Pancreas (tissue), 10 donors: ENCODE measurements at regions of chr6 and their contacts with region 1.

Region 1: GRCh38 chr6:17156112-17156921 is 54.5 kb downstream of the STMND1 start:
- DNase-seq: peak in 5 of 6 donors; percentile 46 to 70 (median 50)
- ATAC-seq: peak; percentile 57 to 79 (median 74)
- H3K4me3 ChIP-seq: no peak overlapping the region
- H3K27ac ChIP-seq: no peak overlapping the region
- H3K4me1 ChIP-seq: no peaks in the 10 kb centered on the region
- H3K27me3 ChIP-seq: no peaks in the 10 kb centered on the region
- CTCF ChIP-seq: peak; percentile 44 to 67 (median 64)

Region 2: DNA sequence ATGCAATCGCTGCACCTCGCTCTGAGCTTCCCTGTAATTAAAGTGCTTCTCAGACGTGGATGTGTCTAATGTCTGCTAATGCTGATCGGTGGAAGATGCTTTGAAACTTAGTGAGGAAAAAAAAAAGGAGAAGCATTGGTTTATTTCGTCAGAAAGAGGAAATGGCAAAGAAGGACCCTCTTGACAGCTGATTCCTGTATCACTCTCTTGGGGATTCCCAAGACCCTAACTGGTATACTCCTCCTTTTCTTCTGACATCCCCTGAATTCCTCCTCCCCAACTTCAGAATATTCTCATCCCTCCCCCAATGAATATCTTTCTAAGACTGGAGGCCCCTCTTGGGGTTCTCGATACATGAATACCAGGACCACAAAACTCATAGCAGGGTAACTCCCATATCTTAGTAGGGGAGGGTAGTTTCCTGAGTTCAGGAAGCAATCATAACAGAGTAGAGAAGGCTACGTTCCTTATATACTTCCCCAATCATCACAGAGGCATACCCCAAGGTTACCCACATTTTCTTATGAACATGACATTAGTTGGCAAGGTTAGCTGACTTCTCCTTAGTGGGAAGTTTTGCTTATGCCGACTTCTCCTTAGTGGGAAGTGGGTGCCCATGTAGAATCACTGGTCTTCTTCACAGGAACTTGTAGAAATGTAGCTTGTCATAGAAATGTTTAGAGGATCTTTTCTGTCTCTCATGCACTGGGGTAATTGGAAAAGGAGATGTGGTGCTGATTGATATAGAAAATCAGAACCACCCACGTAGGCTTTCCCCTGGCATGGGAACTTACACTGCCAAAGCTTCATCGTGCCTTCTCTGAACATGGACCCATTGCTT is 331.3 kb before region 1 on chr6:
- intact Hi-C with region 1: no loop called
- DNase-seq: no peak
- ATAC-seq: peak in 1 of 4 donors; percentile 17
- H3K4me3 ChIP-seq: no peak overlapping the region
- H3K27ac ChIP-seq: no peak overlapping the region
- H3K4me1 ChIP-seq: peaks cover 7 to 13% (median 11%) of the 10 kb centered on the region in 3 donors
- H3K27me3 ChIP-seq: no peaks in the 10 kb centered on the region
- CTCF ChIP-seq: no peak

Region 3: DNA sequence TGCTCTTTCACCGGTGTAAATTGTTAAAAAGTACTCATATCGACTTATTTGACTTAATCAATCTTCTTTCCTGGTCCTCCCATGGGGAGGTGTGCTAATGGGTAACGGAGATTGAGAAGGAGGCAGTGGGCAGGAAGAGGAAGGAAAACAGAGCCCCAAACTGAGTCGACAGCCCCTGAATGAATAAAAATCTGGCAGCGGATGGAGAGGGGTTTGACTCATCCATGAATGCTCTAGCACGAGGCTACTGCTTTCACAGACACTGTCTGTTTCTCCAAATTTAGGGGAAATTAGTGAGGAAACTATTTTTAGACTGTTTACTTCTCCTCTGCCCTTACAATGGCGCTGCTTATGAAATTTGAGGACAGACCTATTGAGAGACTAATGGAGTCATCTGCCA is 252.8 kb before region 1 on chr6:
- intact Hi-C with region 1: no loop called
- DNase-seq: peak in 1 of 6 donors; percentile 19
- ATAC-seq: peak in 2 of 4 donors; percentile 53 to 65
- H3K4me3 ChIP-seq: no peak overlapping the region
- H3K27ac ChIP-seq: no peak overlapping the region
- H3K4me1 ChIP-seq: no peaks in the 10 kb centered on the region
- H3K27me3 ChIP-seq: no peaks in the 10 kb centered on the region
- CTCF ChIP-seq: no peak

Region 4: GRCh38 chr6:17584241-17584803 is 428.0 kb after region 1 on chr6:
- intact Hi-C with region 1: loop called (anchors 5 to 10 kb)
- DNase-seq: peak in 3 of 6 donors; percentile 35 to 37 (median 36)
- ATAC-seq: peak; percentile 72 to 92 (median 86)
- H3K4me3 ChIP-seq: peak overlapping the region in 1 of 4 donors; percentile 16
- H3K27ac ChIP-seq: peak overlapping the region in 1 of 4 donors; percentile 31
- H3K4me1 ChIP-seq: no peaks in the 10 kb centered on the region
- H3K27me3 ChIP-seq: no peaks in the 10 kb centered on the region
- CTCF ChIP-seq: peak; percentile 15 to 59 (median 48)